A549 (cell line): ENCODE measurements at regions of chr7 and their contacts with region 1.

Region 1: DNA sequence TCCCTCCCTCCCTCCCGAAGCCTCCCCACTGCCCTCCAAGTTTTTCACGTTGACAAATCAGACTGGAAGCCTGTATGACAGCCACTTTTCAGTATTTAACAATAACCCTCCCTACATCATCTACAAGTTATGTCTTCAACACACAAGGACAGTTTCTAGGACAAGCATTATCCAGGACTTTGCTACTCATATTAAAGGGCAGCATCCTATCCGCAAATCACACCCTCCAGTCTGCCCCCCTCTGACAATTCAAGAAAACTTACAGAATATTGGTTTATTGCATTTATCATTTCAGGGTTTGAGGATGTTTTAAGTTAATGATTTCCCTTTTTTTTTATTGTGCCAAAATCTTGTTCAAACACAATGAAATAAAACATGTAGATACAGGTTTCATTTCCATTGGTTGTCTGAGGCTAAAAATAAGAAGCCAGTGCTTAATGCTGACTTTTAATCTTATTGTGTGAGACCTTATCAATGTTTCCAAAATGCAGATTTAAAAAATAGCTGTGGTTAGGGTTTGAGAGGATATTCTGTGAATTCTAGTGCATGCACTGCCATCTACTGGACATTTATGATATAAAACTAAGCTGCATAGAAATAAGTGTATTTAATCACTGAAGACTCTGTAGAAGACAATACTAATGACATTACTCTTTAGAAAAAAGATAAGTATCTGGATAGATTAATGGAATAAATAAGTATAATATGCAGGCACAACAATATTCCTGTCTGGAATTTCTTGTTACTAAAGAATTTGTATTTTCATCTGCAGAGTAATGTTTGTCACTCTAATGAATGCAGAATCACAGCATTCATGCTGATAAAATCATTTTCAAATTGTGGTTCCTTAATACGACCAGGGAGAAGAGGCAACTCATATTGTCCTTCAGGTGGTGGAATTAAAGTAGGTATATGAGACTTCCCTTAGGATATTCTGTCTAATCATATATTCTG is 64.1 kb downstream of the CAV1 start:
- DNase-seq: peak; percentile 29 to 63
- ATAC-seq: peak; percentile 69 to 73; a peak in 4 of 6 replicates
- H3K4me3 ChIP-seq: no peak overlapping the region
- H3K27ac ChIP-seq: peak overlapping the region; percentile 69 to 80
- H3K4me1 ChIP-seq: peaks cover 34% of the 10 kb centered on the region
- CTCF ChIP-seq: peak; percentile 94
- EP300 ChIP-seq: no peak
- POLR2A ChIP-seq: no peak
- RAD21 ChIP-seq: peak; percentile 97 to 98

Region 2: DNA sequence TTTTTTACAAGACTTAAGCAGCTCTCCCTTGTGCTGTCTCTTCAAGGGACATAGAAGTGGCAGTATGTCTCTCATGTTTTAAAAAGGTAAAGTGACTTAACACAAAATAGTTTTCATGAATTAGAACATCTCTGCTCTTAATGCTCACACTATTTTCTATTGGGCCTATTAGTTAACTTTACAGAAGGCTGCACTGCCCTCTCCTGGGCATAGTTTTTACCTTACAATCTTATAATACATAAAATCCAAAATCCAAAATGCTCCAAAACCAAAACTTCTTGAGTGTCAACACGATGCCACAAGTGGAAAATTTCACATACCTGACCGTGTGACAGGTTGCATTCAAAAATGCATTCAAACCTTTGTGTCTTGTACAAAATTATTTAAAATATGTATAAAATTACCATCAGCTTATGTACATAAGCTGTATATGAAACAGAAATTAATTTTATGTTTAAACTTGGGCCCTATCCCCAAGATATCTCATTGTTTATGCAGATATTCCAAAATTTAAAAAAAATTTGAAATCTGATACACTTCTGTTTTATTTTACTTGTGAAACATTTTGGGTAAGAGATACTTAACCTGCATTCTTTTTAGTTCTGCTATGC is 352.8 kb before region 1 on chr7:
- CTCF ChIA-PET with region 1: interaction called, 16 read pairs
- POLR2A ChIA-PET with region 1: no interaction called
- DNase-seq: peak; percentile 31 to 60
- ATAC-seq: peak; percentile 60 to 77; a peak in 4 of 6 replicates
- H3K4me3 ChIP-seq: no peak overlapping the region
- H3K27ac ChIP-seq: no peak overlapping the region
- H3K4me1 ChIP-seq: peaks cover 36% of the 10 kb centered on the region
- CTCF ChIP-seq: peak; percentile 89
- EP300 ChIP-seq: no peak
- POLR2A ChIP-seq: no peak
- RAD21 ChIP-seq: peak; percentile 87 to 89

Region 3: DNA sequence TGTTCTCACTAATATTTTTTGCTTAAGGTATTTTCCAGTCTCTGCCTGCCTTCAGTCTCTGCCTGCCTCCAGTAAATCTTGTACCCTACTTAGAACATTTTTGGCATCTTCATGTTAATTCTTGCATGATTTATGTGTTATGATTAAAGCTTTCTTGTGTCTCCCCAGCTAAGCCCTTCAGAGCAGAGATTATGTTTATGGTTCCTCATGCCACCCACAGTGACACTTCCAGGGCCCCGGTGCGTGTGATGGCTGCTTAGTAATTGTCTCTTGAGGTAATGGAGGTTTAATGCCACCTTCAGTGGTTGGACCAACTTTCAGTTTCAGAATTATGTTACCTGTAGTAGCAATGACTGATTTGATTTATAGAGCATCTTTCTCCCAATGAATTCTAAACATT is 12.5 kb after region 1 on chr7:
- CTCF ChIA-PET with region 1: interaction called, 39 read pairs
- POLR2A ChIA-PET with region 1: interaction called, 6 read pairs
- DNase-seq: no peak
- ATAC-seq: no peak
- H3K4me3 ChIP-seq: no peak overlapping the region
- H3K27ac ChIP-seq: 0 out of 6 replicates have a peak overlapping the region, but pooled peaks of 1 of the 2 experiments have one; percentile 14
- H3K4me1 ChIP-seq: no peaks in the 10 kb centered on the region
- CTCF ChIP-seq: no peak
- EP300 ChIP-seq: no peak
- POLR2A ChIP-seq: no peak
- RAD21 ChIP-seq: no peak

Region 4: DNA sequence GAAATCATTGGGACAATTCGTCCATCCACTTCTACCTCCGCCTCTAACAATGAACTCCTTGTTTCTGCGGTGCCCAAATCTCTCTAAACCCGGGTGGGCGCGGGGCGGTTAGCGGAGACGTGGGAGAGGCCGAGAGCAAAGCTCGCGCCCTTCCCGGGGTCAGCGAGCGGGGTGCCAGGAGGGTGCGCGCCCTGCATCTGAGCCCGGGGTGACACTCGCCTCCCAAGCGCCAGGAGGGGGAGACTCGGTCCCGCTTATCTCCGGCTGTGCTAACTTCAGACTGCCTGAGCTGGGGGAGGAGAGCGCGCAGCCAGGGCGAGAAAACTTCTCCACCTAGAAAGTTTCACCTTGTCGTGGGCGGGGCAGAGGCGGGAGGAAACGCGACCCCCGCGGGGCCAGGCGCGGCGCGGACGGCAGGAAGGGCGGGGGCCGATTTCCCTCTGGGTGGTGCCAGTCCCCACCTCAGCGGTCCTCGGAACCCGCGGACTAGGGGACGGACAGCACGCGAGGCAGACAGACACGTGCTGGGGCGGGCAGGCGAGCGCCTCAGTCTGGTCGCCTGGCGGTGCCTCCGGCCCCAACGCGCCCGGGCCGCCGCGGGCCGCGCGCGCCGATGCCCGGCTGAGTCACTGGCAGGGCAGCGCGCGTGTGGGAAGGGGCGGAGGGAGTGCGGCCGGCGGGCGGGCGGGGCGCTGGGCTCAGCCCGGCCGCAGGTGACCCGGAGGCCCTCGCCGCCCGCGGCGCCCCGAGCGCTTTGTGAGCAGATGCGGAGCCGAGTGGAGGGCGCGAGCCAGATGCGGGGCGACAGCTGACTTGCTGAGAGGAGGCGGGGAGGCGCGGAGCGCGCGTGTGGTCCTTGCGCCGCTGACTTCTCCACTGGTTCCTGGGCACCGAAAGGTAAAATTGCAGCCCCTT is 83.0 kb after region 1 on chr7 and contains the start of gene MET:
- CTCF ChIA-PET with region 1: interaction called, 52 read pairs
- POLR2A ChIA-PET with region 1: interaction called, 4 read pairs
- DNase-seq: peak; percentile 88 to 94
- ATAC-seq: peak; percentile 94 to 96
- H3K4me3 ChIP-seq: peak within 1 kb of the TSS; percentile 94
- H3K27ac ChIP-seq: peak within 1 kb of the TSS; percentile 95 to 98
- H3K4me1 ChIP-seq: peaks cover 35% of the 10 kb centered on the region
- CTCF ChIP-seq: peak; percentile 84
- EP300 ChIP-seq: peak in 1 of 2 experiments; percentile 50; a peak in 1 of 5 replicates
- POLR2A ChIP-seq: peak; percentile 58
- RAD21 ChIP-seq: peak; percentile 94 to 98
- polyA plus RNA-seq, gene MET: 161 and 165 TPM in 2 replicates

Region 5: GRCh38 chr7:116802746-116803152 is 213.8 kb after region 1 on chr7:
- CTCF ChIA-PET with region 1: interaction called, 79 read pairs
- POLR2A ChIA-PET with region 1: no interaction called
- DNase-seq: peak; percentile 51 to 84
- ATAC-seq: peak; percentile 47 to 54
- H3K4me3 ChIP-seq: no peak overlapping the region
- H3K27ac ChIP-seq: peak overlapping the region; percentile 80 to 88
- H3K4me1 ChIP-seq: peaks cover 76% of the 10 kb centered on the region
- CTCF ChIP-seq: peak; percentile 68
- EP300 ChIP-seq: no peak
- POLR2A ChIP-seq: no peak
- RAD21 ChIP-seq: peak; percentile 68

Region 6: GRCh38 chr7:116876664-116877442 is 287.9 kb after region 1 on chr7:
- CTCF ChIA-PET with region 1: no interaction called
- POLR2A ChIA-PET with region 1: no interaction called
- DNase-seq: no peak
- ATAC-seq: peak; percentile 54 to 67; a peak in 3 of 6 replicates
- H3K4me3 ChIP-seq: no peak overlapping the region
- H3K27ac ChIP-seq: no peak overlapping the region
- H3K4me1 ChIP-seq: peaks cover 8% of the 10 kb centered on the region; the same call in 1 of the 3 replicates
- CTCF ChIP-seq: no peak
- EP300 ChIP-seq: no peak
- POLR2A ChIP-seq: no peak
- RAD21 ChIP-seq: no peak